AG04449 (cell line): ENCODE measurements at regions of chr17 and their contacts with region 1.

Region 1: DNA sequence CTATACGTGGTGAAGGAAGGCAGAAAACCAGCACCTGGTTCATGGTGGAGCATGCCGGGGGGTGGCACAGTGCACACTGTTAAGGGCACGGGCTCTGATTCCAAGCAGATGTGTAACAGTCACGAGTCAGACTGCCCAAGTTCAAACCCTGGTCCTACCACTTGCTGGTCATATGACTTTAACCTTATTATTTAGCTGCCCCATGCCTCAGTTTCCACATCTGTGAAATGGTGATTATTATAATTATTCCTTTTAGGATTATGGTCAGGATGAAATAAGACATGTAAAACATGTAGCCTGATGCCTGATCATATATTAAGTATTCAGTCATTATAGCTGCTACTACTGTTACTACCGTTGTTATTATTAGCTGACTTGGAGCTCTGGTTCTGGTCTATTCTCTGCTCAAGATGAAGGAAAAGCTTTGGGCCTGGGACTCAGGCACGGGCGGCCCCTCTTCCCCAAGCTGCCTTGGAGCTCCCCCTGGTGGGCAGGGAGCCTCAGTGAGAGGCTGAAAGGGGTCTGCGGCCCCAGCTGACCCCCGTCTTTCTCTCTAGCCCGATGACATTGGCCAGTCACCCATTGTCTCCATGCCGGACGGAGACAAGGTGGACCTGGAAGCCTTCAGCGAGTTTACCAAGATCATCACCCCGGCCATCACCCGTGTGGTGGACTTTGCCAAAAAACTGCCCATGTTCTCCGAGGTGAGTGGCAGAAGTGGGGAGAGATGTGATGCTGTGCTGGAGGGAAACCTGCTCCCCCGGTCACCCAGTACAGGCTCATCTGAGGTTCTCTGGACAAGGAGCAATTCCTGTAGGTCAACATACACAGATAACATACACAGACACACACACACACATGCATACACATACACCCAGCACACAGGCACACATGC is 14.0 kb downstream of the NR1D1 start:
- DNase-seq: no peak
- H3K4me3 ChIP-seq: no peak overlapping the region
- CTCF ChIP-seq: peak; percentile 75

Region 2: DNA sequence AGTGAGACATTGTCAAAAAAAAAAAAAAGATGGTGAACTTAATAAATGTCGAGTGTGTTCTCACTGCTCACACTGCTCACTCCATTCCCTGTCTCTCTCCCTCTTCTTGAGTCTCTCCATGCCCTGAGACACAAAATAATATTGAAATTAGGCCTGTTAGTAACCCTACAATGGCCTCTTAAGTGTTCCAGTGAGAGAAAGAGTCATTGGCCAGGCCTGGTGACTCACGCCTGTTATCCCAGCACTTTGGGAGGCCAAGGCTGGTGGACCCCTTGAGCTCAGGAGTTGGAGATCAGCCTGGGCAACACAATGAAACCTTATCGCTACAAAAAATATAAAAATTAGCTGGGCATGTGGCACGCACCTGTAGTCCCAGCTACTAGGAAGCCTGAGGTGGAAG is 87.3 kb before region 1 on chr17:
- CTCF ChIA-PET with region 1: no interaction called
- POLR2A ChIA-PET with region 1: no interaction called
- DNase-seq: no peak
- H3K4me3 ChIP-seq: no peak overlapping the region
- CTCF ChIP-seq: no peak

Region 3: GRCh38 chr17:40021451-40021971 is 64.9 kb before region 1 on chr17:
- CTCF ChIA-PET with region 1: interaction called, 69 read pairs
- POLR2A ChIA-PET with region 1: no interaction called
- DNase-seq: no peak
- H3K4me3 ChIP-seq: no peak overlapping the region
- CTCF ChIP-seq: no peak

Region 4: GRCh38 chr17:40038882-40039513 is 47.4 kb before region 1 on chr17:
- CTCF ChIA-PET with region 1: interaction called, 11 read pairs
- POLR2A ChIA-PET with region 1: no interaction called
- DNase-seq: peak; percentile 42
- H3K4me3 ChIP-seq: no peak overlapping the region
- CTCF ChIP-seq: peak; percentile 79

Region 5: GRCh38 chr17:40062329-40063186 is 23.8 kb before region 1 on chr17 and contains the start of gene THRA:
- CTCF ChIA-PET with region 1: interaction called, 153 read pairs
- POLR2A ChIA-PET with region 1: no interaction called
- DNase-seq: no peak
- H3K4me3 ChIP-seq: peak within 1 kb of the TSS; percentile 90
- CTCF ChIP-seq: no peak

Region 6: GRCh38 chr17:40068917-40069750 is 17.3 kb before region 1 on chr17:
- CTCF ChIA-PET with region 1: interaction called, 273 read pairs
- POLR2A ChIA-PET with region 1: interaction called, 3 read pairs
- DNase-seq: peak; percentile 36
- H3K4me3 ChIP-seq: peak overlapping the region; percentile 41
- CTCF ChIP-seq: no peak

Region 7: DNA sequence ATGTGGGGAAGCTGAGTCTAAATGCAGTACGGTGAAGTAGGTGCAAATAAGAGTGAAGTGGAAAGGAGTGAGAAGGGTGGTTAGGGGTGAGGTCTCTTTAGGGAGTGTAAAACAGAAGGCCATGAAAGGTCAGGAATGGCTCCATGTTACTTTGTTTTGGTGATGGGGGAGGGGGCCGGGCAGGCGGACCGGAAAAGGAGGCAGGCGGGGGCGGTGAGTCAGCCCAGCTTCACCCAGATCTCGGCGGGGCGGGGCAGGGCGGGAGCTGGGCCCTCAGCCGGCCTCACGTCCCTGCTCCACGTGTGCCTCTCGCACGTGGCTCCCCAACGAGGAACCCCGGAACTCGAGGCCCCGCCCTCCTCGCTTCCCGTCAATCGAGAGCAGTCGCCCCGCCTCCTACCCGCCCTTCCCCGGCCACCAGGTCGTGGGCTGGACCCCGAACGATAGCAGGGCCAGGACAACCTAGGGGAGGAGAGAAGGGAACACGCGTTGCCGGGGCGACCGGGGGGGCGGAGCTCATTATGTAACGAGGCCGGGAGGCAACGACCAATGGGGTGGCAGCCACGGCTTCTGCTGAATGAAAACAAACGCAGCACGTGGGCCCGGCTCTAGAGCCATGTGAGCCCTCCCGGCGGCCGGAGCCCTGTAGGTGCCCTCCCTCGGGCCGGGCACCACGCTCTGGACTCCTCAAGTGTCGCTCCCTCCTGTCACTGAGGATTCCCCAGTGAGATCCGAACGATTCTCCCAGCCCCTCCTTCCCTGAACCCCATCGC is 12.6 kb after region 1 on chr17:
- CTCF ChIA-PET with region 1: interaction called, 273 read pairs
- POLR2A ChIA-PET with region 1: interaction called, 5 read pairs
- DNase-seq: peak; percentile 94
- H3K4me3 ChIP-seq: peak overlapping the region; percentile 87
- CTCF ChIP-seq: no peak

Region 8: DNA sequence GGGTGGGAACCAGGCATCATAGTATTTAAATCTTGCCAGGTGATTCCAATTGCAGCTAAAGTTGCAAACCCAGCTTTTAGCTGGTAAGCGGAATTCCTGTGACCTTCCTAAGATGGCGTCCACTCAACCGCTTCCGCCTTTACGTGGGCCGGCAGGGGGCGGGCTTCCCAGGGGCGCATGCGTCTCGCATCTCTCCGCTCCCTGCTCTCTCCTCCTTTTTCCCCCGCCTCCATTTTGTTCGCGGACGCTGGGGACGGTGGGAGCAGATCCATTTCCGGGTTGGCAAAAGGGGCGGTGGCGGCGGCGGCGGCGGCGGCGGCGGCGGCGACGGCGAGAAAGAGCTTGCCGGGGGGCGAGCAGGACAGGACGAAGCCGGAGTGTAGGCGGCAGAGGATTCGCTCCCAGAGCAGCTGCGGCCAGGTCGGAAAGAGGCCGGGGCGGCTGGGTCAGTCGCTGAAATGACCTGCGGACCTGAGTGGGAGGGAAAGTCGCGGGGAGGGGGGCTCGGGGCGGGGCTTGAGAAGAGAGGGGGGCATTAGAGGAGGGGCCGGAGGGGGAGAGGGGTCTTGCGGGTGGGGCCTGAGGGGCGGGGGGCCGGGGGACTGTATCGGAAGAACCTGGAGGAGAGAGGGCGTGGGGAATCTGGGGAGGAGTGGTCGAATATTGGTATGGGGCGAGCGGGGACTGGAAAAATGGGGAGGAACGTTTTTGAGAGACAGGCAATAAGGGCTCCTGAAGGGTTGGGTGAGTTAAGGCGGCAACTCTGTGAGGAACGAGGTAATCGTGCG is 132.9 kb after region 1 on chr17 and contains the start of gene WIPF2:
- CTCF ChIA-PET with region 1: no interaction called
- POLR2A ChIA-PET with region 1: no interaction called
- DNase-seq: peak; percentile 61
- H3K4me3 ChIP-seq: peak within 1 kb of the TSS; percentile 94
- CTCF ChIP-seq: peak; percentile 80